Esophagus squamous epithelium (tissue), 5 donors: ENCODE measurements at regions of chr1 and their contacts with region 1.

Region 1: GRCh38 chr1:109539676-109540075 is at the start of gene GPR61:
- DNase-seq: no peak
- H3K4me3 ChIP-seq: no peak within 1 kb of the TSS
- H3K27ac ChIP-seq: no peak within 1 kb of the TSS
- H3K4me1 ChIP-seq: peaks cover 0 to 8% (median 0%) of the 10 kb centered on the region in 3 donors
- H3K27me3 ChIP-seq: no peaks in the 10 kb centered on the region
- CTCF ChIP-seq: no peak
- POLR2A ChIP-seq: no peak
- total RNA-seq, gene GPR61: not detected

Region 2: GRCh38 chr1:109636201-109636952 is 96.7 kb after region 1 on chr1:
- intact Hi-C with region 1: loop called (anchors 5 kb)
- DNase-seq: no peak
- H3K4me3 ChIP-seq: no peak overlapping the region
- H3K27ac ChIP-seq: no peak overlapping the region
- H3K4me1 ChIP-seq: peaks cover 0 to 50% (median 10%) of the 10 kb centered on the region in 3 donors
- H3K27me3 ChIP-seq: no peaks in the 10 kb centered on the region
- CTCF ChIP-seq: no peak
- POLR2A ChIP-seq: no peak